Panc1 (cell line): ENCODE measurements at regions of chr17 and their contacts with region 1.

Region 1: DNA sequence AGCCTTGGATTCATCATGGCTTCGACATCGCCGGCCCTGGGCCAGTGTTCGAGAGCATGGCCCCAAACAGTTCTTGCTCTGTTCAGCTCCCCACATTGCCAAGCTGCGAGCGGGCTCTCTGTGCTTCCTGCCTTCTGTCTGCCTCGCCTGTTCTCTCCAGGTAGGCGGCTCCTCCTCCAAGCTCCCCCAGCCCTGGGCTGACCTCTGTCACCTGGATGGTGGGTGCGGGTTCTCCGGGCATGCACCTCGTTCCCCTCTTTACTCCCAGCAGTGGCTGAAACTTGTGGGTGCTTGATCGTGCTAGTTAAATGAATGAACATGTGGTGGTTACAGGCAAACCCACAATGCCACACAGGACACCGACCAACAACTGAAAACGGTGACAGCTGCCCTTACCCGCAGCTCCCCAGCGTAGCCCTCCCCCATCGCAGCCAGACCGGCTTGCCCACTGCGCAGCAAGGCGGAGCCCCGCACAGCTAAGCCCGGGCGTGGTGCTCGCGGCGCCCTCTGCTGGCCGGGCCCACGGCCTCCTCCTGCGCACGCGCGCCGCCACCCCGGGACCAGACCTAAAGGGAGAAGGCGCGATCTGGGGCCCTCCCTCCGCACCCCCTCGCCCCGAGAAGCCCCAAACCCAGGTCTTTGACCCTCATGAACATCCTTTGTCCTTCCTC is 23.0 kb upstream of the EIF1 start:
- DNase-seq: no peak
- ATAC-seq: peak; percentile 90
- H3K4me3 ChIP-seq: peak overlapping the region; percentile 41 to 76
- H3K27ac ChIP-seq: peak overlapping the region; percentile 92
- H3K4me1 ChIP-seq: peaks cover 23% of the 10 kb centered on the region
- H3K27me3 ChIP-seq: no peaks in the 10 kb centered on the region
- CTCF ChIP-seq: peak; percentile 99

Region 2: DNA sequence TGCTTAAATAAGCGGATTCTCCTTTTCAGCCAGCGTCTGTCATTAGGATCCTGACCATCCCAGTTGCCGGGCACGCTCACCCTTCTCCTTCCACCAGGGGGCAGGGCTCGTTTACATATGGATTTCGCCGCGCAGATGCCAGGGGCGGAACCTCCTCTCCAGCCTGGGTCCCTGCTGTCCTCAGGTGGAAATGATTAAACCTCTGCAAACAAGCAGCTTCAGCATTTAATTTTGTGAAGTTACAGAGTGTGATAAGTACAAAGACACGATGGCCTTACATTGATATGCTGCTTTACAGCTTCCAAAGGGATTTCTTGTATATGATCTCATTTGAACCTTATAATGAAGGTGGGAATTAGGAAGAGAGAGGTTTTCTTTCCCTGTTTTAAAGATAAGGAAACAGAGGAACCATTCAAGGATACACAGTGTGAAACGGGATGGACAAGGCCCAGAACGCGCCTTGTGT is 862.1 kb before region 1 on chr17:
- CTCF ChIA-PET with region 1: no interaction called
- POLR2A ChIA-PET with region 1: no interaction called
- in situ Hi-C with region 1: no loop called
- intact Hi-C with region 1: loop called (anchors 2 kb)
- DNase-seq: no peak
- ATAC-seq: peak; percentile 100
- H3K4me3 ChIP-seq: no peak overlapping the region
- H3K27ac ChIP-seq: no peak overlapping the region
- H3K4me1 ChIP-seq: peaks cover 5% of the 10 kb centered on the region
- H3K27me3 ChIP-seq: peaks cover 27% of the 10 kb centered on the region
- CTCF ChIP-seq: peak; percentile 92

Region 3: GRCh38 chr17:41322094-41322902 is 343.4 kb before region 1 on chr17:
- CTCF ChIA-PET with region 1: interaction called, 4 read pairs
- POLR2A ChIA-PET with region 1: no interaction called
- in situ Hi-C with region 1: no loop called
- intact Hi-C with region 1: loop called (anchors 10 kb)
- DNase-seq: peak; percentile 57
- ATAC-seq: peak; percentile 72
- H3K4me3 ChIP-seq: no peak overlapping the region
- H3K27ac ChIP-seq: no peak overlapping the region
- H3K4me1 ChIP-seq: no peaks in the 10 kb centered on the region
- H3K27me3 ChIP-seq: no peaks in the 10 kb centered on the region
- CTCF ChIP-seq: peak; percentile 89

Region 4: GRCh38 chr17:41417576-41418015 is 248.1 kb before region 1 on chr17:
- CTCF ChIA-PET with region 1: no interaction called
- POLR2A ChIA-PET with region 1: no interaction called
- in situ Hi-C with region 1: no loop called
- intact Hi-C with region 1: no loop called
- DNase-seq: no peak
- ATAC-seq: peak; percentile 75
- H3K4me3 ChIP-seq: no peak overlapping the region
- H3K27ac ChIP-seq: peak overlapping the region; percentile 45; the same call in 1 of the 2 replicates
- H3K4me1 ChIP-seq: peaks cover 17% of the 10 kb centered on the region; the same call in 1 of the 2 replicates
- H3K27me3 ChIP-seq: no peaks in the 10 kb centered on the region
- CTCF ChIP-seq: peak; percentile 65

Region 5: GRCh38 chr17:41521574-41522261 is 144.0 kb before region 1 on chr17:
- CTCF ChIA-PET with region 1: interaction called, 13 read pairs
- POLR2A ChIA-PET with region 1: no interaction called
- in situ Hi-C with region 1: no loop called
- intact Hi-C with region 1: no loop called
- DNase-seq: peak; percentile 74
- ATAC-seq: peak; percentile 63
- H3K4me3 ChIP-seq: peak overlapping the region in 1 of 2 experiments; percentile 9; a peak in 1 of 4 replicates
- H3K27ac ChIP-seq: peak overlapping the region; percentile 96
- H3K4me1 ChIP-seq: peaks cover 86% of the 10 kb centered on the region
- H3K27me3 ChIP-seq: no peaks in the 10 kb centered on the region
- CTCF ChIP-seq: no peak

Region 6: GRCh38 chr17:41648411-41649195 is 17.1 kb before region 1 on chr17:
- CTCF ChIA-PET with region 1: interaction called, 69 read pairs
- POLR2A ChIA-PET with region 1: no interaction called
- in situ Hi-C with region 1: no loop called
- intact Hi-C with region 1: loop called (anchors 2 kb)
- DNase-seq: peak; percentile 42
- ATAC-seq: peak; percentile 91
- H3K4me3 ChIP-seq: peak overlapping the region; percentile 21 to 56
- H3K27ac ChIP-seq: peak overlapping the region; percentile 44
- H3K4me1 ChIP-seq: peaks cover 21% of the 10 kb centered on the region
- H3K27me3 ChIP-seq: no peaks in the 10 kb centered on the region
- CTCF ChIP-seq: peak; percentile 88

Region 7: DNA sequence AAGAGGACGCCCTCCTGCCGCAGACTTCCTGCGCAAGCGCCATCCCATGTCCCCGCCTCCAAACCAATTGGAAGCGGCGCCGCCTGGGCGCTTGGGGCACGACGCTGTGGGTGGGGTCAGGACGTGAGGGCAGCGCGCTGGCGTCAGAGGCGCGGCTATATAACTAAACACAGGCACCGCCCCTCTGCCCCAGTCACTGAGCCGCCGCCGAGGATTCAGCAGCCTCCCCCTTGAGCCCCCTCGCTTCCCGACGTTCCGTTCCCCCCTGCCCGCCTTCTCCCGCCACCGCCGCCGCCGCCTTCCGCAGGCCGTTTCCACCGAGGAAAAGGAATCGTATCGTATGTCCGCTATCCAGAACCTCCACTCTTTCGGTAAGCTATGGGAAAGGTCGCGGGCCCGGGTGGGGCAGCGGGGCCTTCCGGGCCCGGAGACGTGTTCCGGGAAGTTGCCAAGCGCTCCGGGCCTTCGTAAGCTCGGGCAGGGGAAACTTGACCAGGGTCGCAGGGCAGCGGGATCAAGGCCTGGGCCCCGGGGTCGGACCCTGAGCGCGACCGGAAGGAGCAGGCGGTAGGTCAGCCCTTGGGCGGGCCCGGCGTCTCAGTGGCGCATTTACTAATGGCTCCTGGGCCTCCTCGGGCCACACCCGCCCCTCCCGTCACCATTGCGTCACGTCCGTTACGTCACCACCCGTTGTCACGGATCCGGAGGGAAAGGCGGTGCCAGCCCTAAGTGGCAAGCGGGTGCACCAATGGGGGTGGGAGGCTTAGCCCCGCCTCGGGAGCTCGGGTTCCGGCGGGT is 23.2 kb after region 1 on chr17 and contains the start of gene EIF1:
- CTCF ChIA-PET with region 1: interaction called, 10 read pairs
- POLR2A ChIA-PET with region 1: interaction called, 7 read pairs
- in situ Hi-C with region 1: no loop called
- intact Hi-C with region 1: no loop called
- DNase-seq: peak; percentile 96
- ATAC-seq: peak; percentile 89
- H3K4me3 ChIP-seq: peak within 1 kb of the TSS; percentile 91 to 99
- H3K27ac ChIP-seq: peak within 1 kb of the TSS; percentile 100
- H3K4me1 ChIP-seq: peaks cover 22% of the 10 kb centered on the region
- H3K27me3 ChIP-seq: no peaks in the 10 kb centered on the region
- CTCF ChIP-seq: no peak
- total RNA-seq, gene EIF1: 747 TPM

Region 8: DNA sequence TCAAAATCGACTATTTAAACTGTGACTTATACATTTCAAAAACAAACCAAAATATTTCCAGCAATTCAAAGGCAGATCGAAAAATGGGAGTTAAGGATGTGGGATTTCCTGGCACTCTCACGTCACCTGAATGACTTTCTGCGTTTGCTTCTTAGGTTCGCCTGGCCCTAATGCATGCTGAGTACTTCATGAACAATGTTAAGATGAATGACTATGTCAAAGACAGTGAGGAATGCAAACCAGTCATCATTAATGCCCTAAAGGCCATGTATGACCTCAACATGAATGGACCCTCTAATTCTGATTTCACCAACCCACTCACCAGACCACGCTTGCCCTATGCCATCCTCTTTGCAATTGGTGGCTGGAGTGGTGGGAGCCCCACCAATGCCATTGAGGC is 179.3 kb after region 1 on chr17:
- CTCF ChIA-PET with region 1: no interaction called
- POLR2A ChIA-PET with region 1: no interaction called
- in situ Hi-C with region 1: no loop called
- intact Hi-C with region 1: no loop called
- DNase-seq: no peak
- ATAC-seq: no peak
- H3K4me3 ChIP-seq: no peak overlapping the region
- H3K27ac ChIP-seq: no peak overlapping the region
- H3K4me1 ChIP-seq: no peaks in the 10 kb centered on the region
- H3K27me3 ChIP-seq: no peaks in the 10 kb centered on the region
- CTCF ChIP-seq: no peak